BJ (cell line): ENCODE measurements at regions of chr2 and their contacts with region 1.

Region 1: DNA sequence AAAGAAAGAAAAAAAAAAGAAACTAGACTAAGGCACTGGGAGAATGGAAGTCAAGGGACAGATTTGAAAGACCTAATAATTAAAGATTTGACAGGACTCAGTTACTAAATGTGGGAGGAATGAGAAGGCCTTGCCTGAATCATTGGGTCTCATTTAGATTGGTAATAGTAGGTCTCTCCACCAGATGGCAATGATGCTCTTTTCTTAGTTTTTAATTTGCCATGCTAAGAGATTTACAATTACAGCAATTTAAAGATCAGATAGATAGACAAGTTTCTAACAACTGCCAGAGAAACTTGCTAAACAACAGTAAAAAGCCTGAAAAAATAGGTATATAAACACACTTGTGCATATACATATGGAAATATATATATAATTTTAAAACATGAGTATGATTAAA is 153.0 kb downstream of the TMEM247 start:
- DNase-seq: peak; percentile 39
- H3K4me3 ChIP-seq: no peak overlapping the region
- H3K27me3 ChIP-seq: no peaks in the 10 kb centered on the region
- CTCF ChIP-seq: peak; percentile 54

Region 2: GRCh38 chr2:46887028-46887885 is 254.9 kb after region 1 on chr2:
- CTCF ChIA-PET with region 1: interaction called, 12 read pairs
- POLR2A ChIA-PET with region 1: no interaction called
- DNase-seq: no peak
- H3K4me3 ChIP-seq: no peak overlapping the region
- H3K27me3 ChIP-seq: no peaks in the 10 kb centered on the region
- CTCF ChIP-seq: no peak

Region 3: GRCh38 chr2:47033102-47033887 is 400.9 kb after region 1 on chr2:
- CTCF ChIA-PET with region 1: no interaction called
- POLR2A ChIA-PET with region 1: no interaction called
- DNase-seq: no peak
- H3K4me3 ChIP-seq: no peak overlapping the region
- H3K27me3 ChIP-seq: no peaks in the 10 kb centered on the region
- CTCF ChIP-seq: no peak